Endothelial cell of umbilical vein (primary cell): ENCODE measurements at regions of chr1 and their contacts with region 1.

Region 1: DNA sequence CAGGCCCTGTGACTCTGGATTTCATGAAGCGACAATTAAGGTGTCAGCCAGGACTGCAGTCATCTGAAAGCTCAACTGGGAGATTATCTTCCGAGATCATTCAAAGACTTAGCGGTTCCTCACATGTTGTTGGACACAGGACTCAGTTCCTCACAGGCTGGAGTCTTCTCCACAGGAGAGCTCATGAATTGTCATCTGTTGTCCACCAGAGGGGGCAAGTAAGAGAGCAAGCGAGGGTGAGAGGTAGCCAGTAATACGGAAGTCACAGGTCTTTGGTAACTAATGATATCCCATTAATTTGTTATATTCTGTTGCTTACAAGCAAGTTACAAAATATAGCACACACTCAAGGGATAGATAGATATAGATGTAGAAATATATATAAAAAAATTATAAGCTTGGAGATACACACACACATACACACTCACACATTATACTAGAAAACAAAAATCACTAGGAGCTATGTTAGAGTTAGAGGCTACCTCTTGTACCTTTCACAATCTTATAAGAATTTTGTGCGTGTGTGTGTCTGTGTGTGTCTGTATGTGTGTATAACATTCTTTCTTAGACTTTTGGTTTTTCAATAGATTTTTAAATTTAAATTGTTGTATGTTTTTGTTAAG is 1695.3 kb downstream of the BRINP3 start:
- DNase-seq: peak; percentile 31
- H3K4me3 ChIP-seq: no peak overlapping the region
- H3K27ac ChIP-seq: no peak overlapping the region
- H3K4me1 ChIP-seq: no peaks in the 10 kb centered on the region
- H3K27me3 ChIP-seq: no peaks in the 10 kb centered on the region
- CTCF ChIP-seq: peak; percentile 39 to 44
- POLR2A ChIP-seq: no peak

Region 2: DNA sequence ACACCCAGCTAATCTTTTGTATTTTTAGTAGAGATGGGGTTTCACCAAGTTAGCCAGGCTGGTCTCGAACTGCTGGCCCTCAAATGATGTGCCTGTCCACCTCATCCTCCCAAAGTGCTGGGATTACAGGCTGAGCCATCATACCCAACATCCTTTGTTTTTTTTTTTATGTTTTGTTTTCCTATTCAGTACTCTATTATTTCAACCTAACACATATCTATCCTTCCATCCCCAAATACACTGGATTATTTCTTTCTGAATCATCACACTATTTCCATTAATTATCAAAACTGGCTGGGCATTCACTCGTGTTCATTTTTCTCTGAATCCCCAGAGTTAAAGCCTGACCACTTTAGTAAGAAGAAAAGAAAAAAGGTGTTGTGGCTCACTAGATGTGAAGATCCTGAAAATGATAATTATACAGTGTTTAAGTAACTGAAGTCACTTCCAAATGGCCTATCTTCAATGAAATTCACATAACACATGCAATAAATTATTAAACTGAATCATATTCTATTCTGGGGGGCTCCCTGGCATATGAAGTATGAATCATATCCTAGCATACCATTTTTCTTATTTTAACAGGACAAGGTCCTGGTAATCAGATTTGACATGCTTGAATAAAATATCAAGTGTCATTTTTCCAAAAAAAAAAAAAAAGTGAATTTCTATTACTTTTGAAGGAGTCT is 58.9 kb before region 1 on chr1:
- CTCF ChIA-PET with region 1: no interaction called
- POLR2A ChIA-PET with region 1: no interaction called
- dilution Hi-C with region 1: no loop called
- intact Hi-C with region 1: no loop called
- DNase-seq: peak; percentile 57
- H3K4me3 ChIP-seq: no peak overlapping the region
- H3K27ac ChIP-seq: peak overlapping the region; percentile 53
- H3K4me1 ChIP-seq: peaks cover 11% of the 10 kb centered on the region
- H3K27me3 ChIP-seq: no peaks in the 10 kb centered on the region
- CTCF ChIP-seq: no peak
- POLR2A ChIP-seq: no peak

Region 3: DNA sequence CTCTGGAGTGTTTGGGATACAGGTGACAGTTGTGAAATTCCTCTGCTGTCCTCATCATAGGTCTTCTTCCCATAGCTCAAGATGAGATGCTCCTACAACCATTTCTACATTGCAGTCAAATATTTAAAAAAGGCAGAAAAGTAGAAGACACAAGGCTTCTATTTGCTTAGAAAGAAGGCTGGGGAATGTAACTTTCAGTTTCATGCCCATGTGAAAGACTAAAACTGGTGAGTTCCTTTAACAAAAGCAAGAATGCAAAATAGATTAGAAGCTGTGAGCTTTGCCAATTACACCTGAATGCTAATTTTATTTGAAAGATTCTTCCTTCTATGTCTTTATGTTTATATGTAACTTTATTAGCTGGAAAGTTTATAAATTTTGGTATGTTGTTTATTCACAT is 12.6 kb after region 1 on chr1:
- CTCF ChIA-PET with region 1: interaction called, 14 read pairs
- POLR2A ChIA-PET with region 1: no interaction called
- dilution Hi-C with region 1: no loop called
- intact Hi-C with region 1: no loop called
- DNase-seq: no peak
- H3K4me3 ChIP-seq: no peak overlapping the region
- H3K27ac ChIP-seq: no peak overlapping the region
- H3K4me1 ChIP-seq: no peaks in the 10 kb centered on the region
- H3K27me3 ChIP-seq: no peaks in the 10 kb centered on the region
- CTCF ChIP-seq: no peak
- POLR2A ChIP-seq: no peak

Region 4: GRCh38 chr1:190436615-190437014 is 1654.3 kb after region 1 on chr1:
- CTCF ChIA-PET with region 1: interaction called, 14 read pairs
- POLR2A ChIA-PET with region 1: no interaction called
- dilution Hi-C with region 1: no loop called
- intact Hi-C with region 1: no loop called
- DNase-seq: peak; percentile 42
- H3K4me3 ChIP-seq: no peak overlapping the region
- H3K27ac ChIP-seq: no peak overlapping the region
- H3K4me1 ChIP-seq: no peaks in the 10 kb centered on the region
- H3K27me3 ChIP-seq: no peaks in the 10 kb centered on the region
- CTCF ChIP-seq: no peak
- POLR2A ChIP-seq: no peak